ENCODE measurements at regions of chr2 and their contacts with region 1.

Region 1: DNA sequence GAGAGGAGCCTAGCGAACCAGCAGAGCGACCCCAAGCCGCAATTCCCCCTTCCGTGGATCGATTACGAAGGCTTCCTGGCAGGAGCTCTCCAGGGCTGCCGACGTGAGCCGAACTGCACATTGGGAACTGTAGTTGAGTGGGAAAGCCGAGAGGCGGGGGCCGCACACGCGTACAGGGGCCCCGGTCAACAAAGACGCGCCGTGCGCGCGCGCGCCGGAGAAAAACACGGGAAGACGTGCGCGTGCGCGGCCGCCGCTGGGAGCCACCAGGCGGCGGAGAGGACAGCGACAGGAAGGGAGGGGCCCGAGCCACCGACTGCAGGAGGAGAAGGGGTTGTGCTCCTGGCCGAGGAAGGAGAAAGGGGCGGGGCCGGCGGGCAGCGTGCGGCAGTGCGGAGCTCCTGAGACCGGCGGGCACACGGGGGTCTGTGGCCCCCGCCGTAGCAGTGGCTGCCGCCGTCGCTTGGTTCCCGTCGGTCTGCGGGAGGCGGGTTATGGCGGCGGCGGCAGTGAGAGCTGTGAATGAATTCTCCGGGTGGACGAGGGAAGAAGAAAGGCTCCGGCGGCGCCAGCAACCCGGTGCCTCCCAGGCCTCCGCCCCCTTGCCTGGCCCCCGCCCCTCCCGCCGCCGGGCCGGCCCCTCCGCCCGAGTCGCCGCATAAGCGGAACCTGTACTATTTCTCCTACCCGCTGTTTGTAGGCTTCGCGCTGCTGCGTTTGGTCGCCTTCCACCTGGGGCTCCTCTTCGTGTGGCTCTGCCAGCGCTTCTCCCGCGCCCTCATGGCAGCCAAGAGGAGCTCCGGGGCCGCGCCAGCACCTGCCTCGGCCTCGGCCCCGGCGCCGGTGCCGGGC is at the start of gene SPAST:
- DNase-seq: peak; percentile 98
- H3K4me3 Mint-ChIP-seq: peak within 1 kb of the TSS; percentile 97
- H3K27ac Mint-ChIP-seq: peak within 1 kb of the TSS; percentile 90
- H3K4me1 Mint-ChIP-seq: peaks cover 22% of the 10 kb centered on the region
- H3K27me3 Mint-ChIP-seq: no peaks in the 10 kb centered on the region
- total RNA-seq, gene SPAST: 15.3 to 15.8 TPM

Region 2: GRCh38 chr2:30447149-30448045 is 1616.1 kb before region 1 on chr2 and contains the start of gene LCLAT1:
- CTCF ChIA-PET with region 1: no interaction called
- POLR2A ChIA-PET with region 1: no interaction called
- intact Hi-C with region 1: loop called (anchors 10 kb)
- DNase-seq: peak; percentile 90
- H3K4me3 Mint-ChIP-seq: peak within 1 kb of the TSS; percentile 88
- H3K27ac Mint-ChIP-seq: peak within 1 kb of the TSS; percentile 95
- H3K4me1 Mint-ChIP-seq: peaks cover 24% of the 10 kb centered on the region
- H3K27me3 Mint-ChIP-seq: no peaks in the 10 kb centered on the region
- total RNA-seq, gene LCLAT1: 21.5 to 24.3 TPM

Region 3: GRCh38 chr2:32010670-32011484 is 52.7 kb before region 1 on chr2 and contains the start of gene MEMO1:
- CTCF ChIA-PET with region 1: interaction called, 7 read pairs
- POLR2A ChIA-PET with region 1: interaction called, 5 read pairs
- intact Hi-C with region 1: loop called (anchors 1 kb)
- DNase-seq: peak; percentile 96
- H3K4me3 Mint-ChIP-seq: peak within 1 kb of the TSS; percentile 86
- H3K27ac Mint-ChIP-seq: peak within 1 kb of the TSS; percentile 95
- H3K4me1 Mint-ChIP-seq: peaks cover 34% of the 10 kb centered on the region
- H3K27me3 Mint-ChIP-seq: no peaks in the 10 kb centered on the region
- total RNA-seq, gene MEMO1: 44.7 to 47.6 TPM

Region 4: GRCh38 chr2:32168513-32168912 is 105.0 kb after region 1 on chr2:
- CTCF ChIA-PET with region 1: interaction called, 5 read pairs
- POLR2A ChIA-PET with region 1: interaction called, 12 read pairs
- intact Hi-C with region 1: loop called (anchors 1 kb)
- DNase-seq: no peak
- H3K4me3 Mint-ChIP-seq: no peak overlapping the region
- H3K27ac Mint-ChIP-seq: no peak overlapping the region
- H3K4me1 Mint-ChIP-seq: peaks cover 45% of the 10 kb centered on the region
- H3K27me3 Mint-ChIP-seq: no peaks in the 10 kb centered on the region

Region 5: GRCh38 chr2:32200814-32201213 is 137.3 kb after region 1 on chr2:
- CTCF ChIA-PET with region 1: no interaction called
- POLR2A ChIA-PET with region 1: no interaction called
- intact Hi-C with region 1: no loop called
- DNase-seq: no peak
- H3K4me3 Mint-ChIP-seq: no peak overlapping the region
- H3K27ac Mint-ChIP-seq: no peak overlapping the region
- H3K4me1 Mint-ChIP-seq: peaks cover 3% of the 10 kb centered on the region
- H3K27me3 Mint-ChIP-seq: no peaks in the 10 kb centered on the region

Region 6: GRCh38 chr2:32356735-32357644 is 293.5 kb after region 1 on chr2 and contains the start of gene BIRC6:
- CTCF ChIA-PET with region 1: no interaction called
- POLR2A ChIA-PET with region 1: interaction called, 4 read pairs
- intact Hi-C with region 1: loop called (anchors 1 kb)
- DNase-seq: peak; percentile 99
- H3K4me3 Mint-ChIP-seq: peak within 1 kb of the TSS; percentile 84
- H3K27ac Mint-ChIP-seq: peak within 1 kb of the TSS; percentile 92
- H3K4me1 Mint-ChIP-seq: peaks cover 39% of the 10 kb centered on the region
- H3K27me3 Mint-ChIP-seq: no peaks in the 10 kb centered on the region
- total RNA-seq, gene BIRC6: 58.2 to 62.4 TPM